Colonic mucosa (tissue), 4 donors: ENCODE measurements at regions of chr1 and their contacts with region 1.

Region 1: GRCh38 chr1:20212685-20213331 is 26.5 kb upstream of the PLA2G2C start:
- DNase-seq: peak; percentile 78
- H3K4me3 ChIP-seq: no peak overlapping the region
- H3K27ac ChIP-seq: peak overlapping the region; percentile 76
- H3K4me1 ChIP-seq: peaks cover 8% of the 10 kb centered on the region
- H3K27me3 ChIP-seq: no peaks in the 10 kb centered on the region
- CTCF ChIP-seq: peak; percentile 72

Region 2: GRCh38 chr1:19967808-19968207 is 245.0 kb before region 1 on chr1:
- intact Hi-C with region 1: no loop called
- DNase-seq: no peak
- H3K4me3 ChIP-seq: no peak overlapping the region
- H3K27ac ChIP-seq: no peak overlapping the region
- H3K4me1 ChIP-seq: no peaks in the 10 kb centered on the region
- H3K27me3 ChIP-seq: no peaks in the 10 kb centered on the region
- CTCF ChIP-seq: no peak

Region 3: DNA sequence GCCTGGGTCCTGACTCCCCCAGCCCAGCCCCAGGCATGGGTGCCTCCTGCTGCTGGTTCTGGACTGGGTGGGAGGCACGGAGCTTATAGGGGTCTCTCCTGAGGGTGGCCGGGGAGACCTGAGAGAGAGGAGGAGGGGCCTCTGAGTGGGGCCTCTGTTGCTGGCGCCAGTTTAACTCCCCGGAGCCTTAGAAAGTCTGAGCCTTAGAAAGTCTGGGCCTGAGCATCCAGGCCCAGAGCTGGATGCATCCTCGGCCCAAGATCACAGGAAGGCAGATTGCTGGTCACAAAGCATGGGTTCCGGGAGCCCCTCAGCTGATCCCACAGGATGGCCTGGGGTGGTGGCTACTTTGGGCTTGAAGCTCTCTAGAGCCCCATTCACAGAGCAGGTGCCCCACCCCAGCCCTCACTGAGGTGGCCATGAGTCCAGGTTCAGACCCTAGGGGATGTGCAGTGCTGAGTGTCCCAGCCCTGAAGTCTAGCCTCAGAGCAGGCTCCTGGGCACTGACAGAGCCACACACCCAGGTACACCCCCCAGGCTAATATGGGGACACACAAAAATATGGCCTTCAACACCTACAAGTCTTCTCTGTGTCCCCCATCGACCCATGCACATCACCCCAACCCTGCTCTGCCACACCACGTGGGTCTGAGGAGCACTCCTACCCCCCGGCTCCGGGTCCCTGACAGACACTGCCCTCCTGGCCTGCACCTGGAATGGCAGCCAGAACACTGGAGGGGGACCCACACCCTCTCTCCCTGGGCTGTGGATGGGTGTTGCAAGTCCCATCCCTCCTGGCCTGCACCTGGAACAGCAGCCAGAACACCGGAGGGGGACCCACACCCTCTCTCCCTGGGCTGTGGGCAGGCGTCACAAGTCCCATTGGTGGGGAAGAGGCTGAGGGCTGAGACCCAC is 64.0 kb before region 1 on chr1:
- intact Hi-C with region 1: no loop called
- DNase-seq: no peak
- H3K4me3 ChIP-seq: no peak overlapping the region
- H3K27ac ChIP-seq: no peak overlapping the region
- H3K4me1 ChIP-seq: no peaks in the 10 kb centered on the region
- H3K27me3 ChIP-seq: no peaks in the 10 kb centered on the region
- CTCF ChIP-seq: no peak

Region 4: DNA sequence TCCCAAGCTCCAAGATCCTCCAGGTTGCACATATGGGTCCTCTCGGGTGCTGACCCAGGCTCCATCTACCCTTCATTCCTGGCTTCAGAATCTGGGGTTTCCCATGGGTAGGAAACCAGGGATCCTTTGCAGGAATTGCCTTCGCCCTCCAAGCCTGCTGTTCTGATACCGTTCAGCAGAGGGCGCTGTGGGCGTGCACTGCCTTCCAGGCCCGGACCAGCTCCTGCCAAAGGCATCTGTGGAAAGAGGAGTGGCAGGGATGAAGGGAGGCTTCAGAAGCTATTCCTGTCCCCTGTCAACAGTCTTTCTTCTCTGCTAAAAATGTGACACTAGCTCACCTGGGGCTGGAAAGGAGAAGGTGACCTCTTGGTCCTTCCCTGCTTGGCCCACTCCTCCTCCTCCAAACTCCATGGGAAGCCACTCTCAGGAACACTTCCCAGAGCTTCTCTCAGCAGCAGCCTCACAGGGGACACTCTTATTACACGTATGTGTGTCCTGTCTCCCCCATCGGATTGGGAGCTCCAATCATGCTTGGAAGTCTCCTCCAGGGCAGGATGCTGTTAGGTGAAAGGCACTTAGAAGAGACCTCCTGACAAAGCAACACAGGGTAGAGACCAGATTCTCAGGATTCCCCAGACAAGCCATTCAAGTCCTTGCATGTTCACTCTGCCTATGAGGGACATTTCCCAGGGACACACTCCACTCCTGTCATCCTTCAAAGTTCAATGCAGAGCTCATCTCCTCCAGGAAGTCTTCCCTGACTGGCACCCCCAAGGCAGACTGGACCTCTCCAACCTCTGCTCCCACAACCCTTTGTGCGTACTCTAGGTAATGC is 149.2 kb after region 1 on chr1:
- intact Hi-C with region 1: loop called (anchors 10 kb)
- DNase-seq: peak; percentile 75
- H3K4me3 ChIP-seq: no peak overlapping the region
- H3K27ac ChIP-seq: no peak overlapping the region
- H3K4me1 ChIP-seq: peaks cover 8% of the 10 kb centered on the region
- H3K27me3 ChIP-seq: peaks cover 26% of the 10 kb centered on the region
- CTCF ChIP-seq: peak; percentile 70

Region 5: GRCh38 chr1:20430355-20431175 is 217.8 kb after region 1 on chr1:
- intact Hi-C with region 1: loop called (anchors 2 kb)
- DNase-seq: peak; percentile 47
- H3K4me3 ChIP-seq: no peak overlapping the region
- H3K27ac ChIP-seq: no peak overlapping the region
- H3K4me1 ChIP-seq: no peaks in the 10 kb centered on the region
- H3K27me3 ChIP-seq: no peaks in the 10 kb centered on the region
- CTCF ChIP-seq: peak; percentile 59